Common myeloid progenitor, CD34-positive (primary cell): ENCODE measurements at regions of chr18 and their contacts with region 1.

Region 1: DNA sequence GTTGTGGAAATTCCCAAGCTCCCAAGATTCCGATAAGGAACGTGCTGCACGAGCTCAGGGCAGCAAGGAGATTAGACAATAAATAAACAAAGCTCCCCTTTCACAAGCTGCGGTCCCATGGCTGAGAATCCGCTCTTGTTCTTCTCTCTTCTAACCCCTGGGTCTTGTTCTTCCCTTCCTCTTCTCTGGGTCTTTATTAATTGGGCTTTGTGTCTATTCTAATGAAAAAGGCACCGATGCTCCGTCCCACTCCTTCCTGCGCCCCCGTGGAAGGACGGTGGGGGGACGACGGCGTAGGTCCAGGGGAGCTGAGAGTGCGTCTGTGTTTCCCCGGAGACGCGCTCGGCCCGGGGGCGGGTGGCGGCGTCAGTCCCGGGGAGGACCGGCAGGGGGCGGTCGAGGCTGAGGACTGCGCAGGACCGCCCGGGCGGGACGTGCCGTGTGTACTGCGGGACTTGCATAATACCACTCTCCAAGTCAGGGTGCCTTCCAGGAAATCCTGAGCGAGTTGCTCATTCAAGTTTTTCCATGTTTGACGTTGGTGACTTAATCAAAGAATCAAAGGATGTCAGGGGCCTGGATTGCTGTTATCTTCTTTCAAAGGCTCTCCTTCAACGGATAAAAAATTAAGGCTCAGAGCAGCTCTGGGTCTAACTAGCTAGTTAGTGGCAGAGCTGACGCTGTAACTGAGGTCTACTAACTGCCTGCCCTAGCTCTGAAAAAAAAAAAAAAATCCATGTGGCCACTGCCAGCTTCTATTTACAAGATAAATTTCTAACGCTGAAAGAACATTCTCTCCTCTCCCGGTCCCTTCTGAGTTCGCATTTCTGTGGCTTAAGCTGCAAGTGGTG is 321.4 kb downstream of the TGIF1 start:
- DNase-seq: peak; percentile 83 to 91 (median 90)
- H3K4me3 ChIP-seq: peak overlapping the region in 6 of 7 experiments; percentile 35 to 74 (median 56)
- H3K27ac ChIP-seq: no peak overlapping the region
- H3K4me1 ChIP-seq: peaks cover 0 to 11% (median 5%) of the 10 kb centered on the region in 4 experiments
- H3K27me3 ChIP-seq: peaks cover 0 to 3% (median 2%) of the 10 kb centered on the region in 5 experiments

Region 2: GRCh38 chr18:3703732-3704176 is 67.6 kb before region 1 on chr18:
- CTCF ChIA-PET with region 1: interaction called, 28 read pairs
- POLR2A ChIA-PET with region 1: no interaction called
- DNase-seq: peak; percentile 60 to 74 (median 67)
- H3K4me3 ChIP-seq: peak overlapping the region in 1 of 7 experiments; percentile 25
- H3K27ac ChIP-seq: no peak overlapping the region
- H3K4me1 ChIP-seq: peaks cover 0 to 19% (median 15%) of the 10 kb centered on the region in 4 experiments
- H3K27me3 ChIP-seq: no peaks in the 10 kb centered on the region

Region 3: GRCh38 chr18:3782901-3783300 is 11.6 kb after region 1 on chr18:
- CTCF ChIA-PET with region 1: interaction called, 26 read pairs
- POLR2A ChIA-PET with region 1: no interaction called
- DNase-seq: no peak
- H3K4me3 ChIP-seq: no peak overlapping the region
- H3K27ac ChIP-seq: no peak overlapping the region
- H3K4me1 ChIP-seq: no peaks in the 10 kb centered on the region
- H3K27me3 ChIP-seq: no peaks in the 10 kb centered on the region

Region 4: DNA sequence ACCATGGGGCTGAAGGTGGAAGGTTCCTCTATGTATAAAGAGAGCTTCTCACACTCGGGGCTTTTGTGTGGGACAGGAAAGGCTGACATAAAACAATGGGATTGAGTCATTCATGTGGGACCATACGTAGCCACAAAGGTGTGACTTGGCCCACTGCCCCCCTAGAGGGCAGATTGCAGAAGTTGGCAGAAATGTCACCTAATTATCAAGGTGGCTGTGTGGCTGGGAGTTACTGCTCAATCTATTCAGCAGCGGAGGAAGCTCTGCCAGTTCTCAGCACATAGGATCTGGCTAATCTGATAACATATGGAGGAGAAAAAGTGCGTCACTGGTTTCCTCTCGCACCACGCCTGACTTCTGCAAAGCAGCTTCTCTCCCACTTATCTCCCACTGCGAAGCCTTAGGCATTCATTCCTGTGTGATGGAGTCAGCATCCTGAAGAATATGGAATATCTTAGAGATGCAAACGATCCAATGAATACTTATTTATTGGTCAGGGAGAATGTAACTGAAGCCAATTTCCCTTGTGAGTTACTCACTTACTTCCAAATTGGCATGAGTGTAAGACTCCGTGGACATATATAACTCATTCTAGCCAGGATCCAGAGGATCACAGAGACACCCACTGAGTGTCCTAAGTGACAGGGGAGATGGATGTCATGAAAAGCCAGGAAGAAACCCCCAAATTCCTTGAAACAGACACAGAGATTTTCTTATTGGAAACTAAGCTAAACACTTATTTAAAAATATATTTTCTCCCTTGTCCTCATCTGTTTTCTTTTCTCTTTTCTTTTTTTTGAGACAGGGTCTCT is 23.4 kb after region 1 on chr18:
- CTCF ChIA-PET with region 1: interaction called, 26 read pairs
- POLR2A ChIA-PET with region 1: no interaction called
- DNase-seq: peak; percentile 75 to 94 (median 92)
- H3K4me3 ChIP-seq: peak overlapping the region in 1 of 7 experiments; percentile 8
- H3K27ac ChIP-seq: no peak overlapping the region
- H3K4me1 ChIP-seq: peaks cover 9 to 36% (median 25%) of the 10 kb centered on the region in 4 experiments
- H3K27me3 ChIP-seq: no peaks in the 10 kb centered on the region

Region 5: GRCh38 chr18:3863593-3863992 is 92.2 kb after region 1 on chr18:
- CTCF ChIA-PET with region 1: interaction called, 70 read pairs
- POLR2A ChIA-PET with region 1: no interaction called
- DNase-seq: no peak
- H3K4me3 ChIP-seq: no peak overlapping the region
- H3K27ac ChIP-seq: no peak overlapping the region
- H3K4me1 ChIP-seq: no peaks in the 10 kb centered on the region
- H3K27me3 ChIP-seq: no peaks in the 10 kb centered on the region

Region 6: DNA sequence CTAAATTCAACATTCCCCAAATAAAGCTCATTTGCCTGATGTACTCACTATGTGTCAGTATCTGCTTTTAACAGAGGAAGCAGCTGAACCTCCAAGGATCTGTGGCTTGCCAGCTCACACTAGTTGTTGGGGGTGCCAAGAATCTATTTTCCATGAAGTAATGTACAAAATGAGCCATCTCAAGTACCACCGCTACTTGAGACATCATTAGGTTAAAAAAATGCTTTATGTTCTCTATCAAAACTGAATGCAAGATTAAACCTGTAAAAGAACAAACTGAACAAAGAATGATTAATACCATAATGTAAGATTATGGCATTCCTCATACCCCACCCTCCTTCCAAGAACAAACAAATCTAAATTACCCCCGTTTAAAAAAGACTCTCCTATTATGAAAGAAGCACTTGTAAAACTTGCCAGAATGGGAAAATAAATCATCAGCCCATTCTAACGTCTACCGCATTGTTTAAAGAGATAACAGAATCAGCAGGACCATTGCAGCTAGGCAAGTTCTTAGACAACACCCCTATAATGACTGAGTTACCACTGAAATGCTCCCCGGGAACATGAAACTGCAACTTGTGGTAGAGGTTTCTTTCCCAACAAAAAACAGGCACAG is 212.1 kb after region 1 on chr18:
- CTCF ChIA-PET with region 1: interaction called, 10 read pairs
- POLR2A ChIA-PET with region 1: no interaction called
- DNase-seq: peak; percentile 58 to 88 (median 84)
- H3K4me3 ChIP-seq: no peak overlapping the region
- H3K27ac ChIP-seq: no peak overlapping the region
- H3K4me1 ChIP-seq: peaks cover 0 to 28% (median 6%) of the 10 kb centered on the region in 4 experiments
- H3K27me3 ChIP-seq: no peaks in the 10 kb centered on the region